Vagina (tissue), 2 donors: ENCODE measurements at regions of chr11 and their contacts with region 1.

Region 1: GRCh38 chr11:126416542-126417090 is 61.1 kb downstream of the ST3GAL4 start:
- DNase-seq: no peak
- H3K4me3 ChIP-seq: peak overlapping the region; percentile 50 to 52
- H3K27ac ChIP-seq: peak overlapping the region; percentile 86
- H3K4me1 ChIP-seq: peaks cover 40% of the 10 kb centered on the region
- H3K27me3 ChIP-seq: no peaks in the 10 kb centered on the region
- CTCF ChIP-seq: no peak
- POLR2A ChIP-seq: peak in 1 of 2 donors; percentile 44

Region 2: DNA sequence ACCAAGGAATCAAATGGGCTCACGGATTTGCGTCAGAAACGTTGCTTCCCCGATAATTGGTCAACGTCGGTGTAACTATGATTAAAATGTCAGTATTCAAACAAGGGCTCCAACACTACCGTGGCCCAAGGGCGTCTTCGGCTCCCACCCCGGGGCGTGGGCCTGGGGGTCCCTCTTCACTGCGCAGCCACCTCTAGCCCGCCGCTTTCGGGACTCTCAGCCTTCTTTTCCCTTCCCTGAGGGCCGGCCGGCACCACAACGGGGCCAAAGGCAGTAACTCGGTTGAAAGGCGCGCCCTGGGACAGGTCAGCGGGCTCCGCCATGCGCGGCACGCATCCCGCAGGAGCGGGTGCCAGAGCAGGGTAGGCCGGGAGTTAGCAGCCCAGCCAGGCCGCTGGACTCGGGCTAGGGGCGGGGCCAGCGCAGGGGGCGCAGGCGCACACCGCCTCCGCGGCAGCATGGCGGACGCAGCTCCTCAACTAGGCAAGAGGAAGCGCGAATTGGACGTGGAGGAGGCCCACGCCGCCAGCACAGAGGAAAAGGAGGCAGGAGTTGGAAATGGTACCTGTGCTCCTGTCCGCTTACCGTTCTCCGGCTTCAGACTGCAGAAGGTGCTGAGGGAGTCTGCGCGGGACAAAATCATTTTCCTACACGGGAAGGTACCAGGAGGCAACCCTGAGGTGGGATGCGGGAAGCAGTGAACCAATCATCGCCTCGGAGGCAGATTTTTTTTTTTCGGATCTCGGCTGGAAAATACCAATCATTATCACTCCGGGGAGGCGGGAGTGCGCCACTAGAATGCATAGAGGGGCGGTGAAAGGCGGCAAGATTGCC is 112.8 kb before region 1 on chr11 and contains the start of gene DCPS:
- intact Hi-C with region 1: loop called (anchors 10 kb)
- DNase-seq: peak in 1 of 2 donors; percentile 94
- H3K4me3 ChIP-seq: peak within 1 kb of the TSS; percentile 59 to 76
- H3K27ac ChIP-seq: peak within 1 kb of the TSS; percentile 89
- H3K4me1 ChIP-seq: peaks cover 9% of the 10 kb centered on the region
- H3K27me3 ChIP-seq: no peaks in the 10 kb centered on the region
- CTCF ChIP-seq: no peak
- POLR2A ChIP-seq: peak in 1 of 2 donors; percentile 36
- total RNA-seq, gene DCPS: 15.5 TPM

Region 3: DNA sequence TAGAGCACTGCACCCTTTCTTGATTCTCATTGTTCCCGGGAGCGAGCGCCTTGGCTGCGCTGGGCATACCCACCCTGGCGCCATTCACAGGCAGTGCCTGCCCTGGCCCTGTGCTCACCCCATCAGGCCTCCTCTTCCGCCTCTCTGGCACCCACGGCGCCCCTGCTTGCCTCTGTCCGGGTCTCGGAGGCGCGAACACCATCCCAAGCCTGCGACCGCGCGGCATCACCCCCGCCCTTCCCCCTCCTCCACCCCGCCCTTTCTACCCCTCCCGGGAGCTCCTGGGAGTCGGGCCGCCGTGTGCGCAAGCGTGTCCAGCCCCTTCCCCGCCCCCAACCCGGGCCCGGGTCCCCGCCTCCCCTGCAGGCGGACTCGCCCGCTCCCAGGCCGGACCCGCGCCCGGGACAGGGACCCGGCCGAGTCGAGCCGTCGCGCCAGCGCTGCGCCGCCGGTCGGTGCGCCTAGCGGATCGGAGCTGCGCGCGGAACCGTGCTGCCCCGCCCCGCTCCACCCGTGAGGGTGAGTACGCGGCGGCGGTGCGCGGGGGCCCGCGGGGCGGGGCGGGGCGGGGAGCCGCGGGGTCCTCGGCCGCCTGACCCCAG is 61.2 kb before region 1 on chr11 and contains the start of gene ST3GAL4:
- intact Hi-C with region 1: loop called (anchors 5 kb)
- DNase-seq: peak in 1 of 2 donors; percentile 89
- H3K4me3 ChIP-seq: peak within 1 kb of the TSS; percentile 72 to 86
- H3K27ac ChIP-seq: peak within 1 kb of the TSS; percentile 88
- H3K4me1 ChIP-seq: peaks cover 76% of the 10 kb centered on the region
- H3K27me3 ChIP-seq: no peaks in the 10 kb centered on the region
- CTCF ChIP-seq: no peak
- POLR2A ChIP-seq: peak in 1 of 2 donors; percentile 24
- total RNA-seq, gene ST3GAL4: 41.5 TPM

Region 4: GRCh38 chr11:126403658-126404057 is 13.0 kb before region 1 on chr11:
- intact Hi-C with region 1: no loop called
- DNase-seq: no peak
- H3K4me3 ChIP-seq: no peak overlapping the region
- H3K27ac ChIP-seq: peak overlapping the region; percentile 14
- H3K4me1 ChIP-seq: peaks cover 34% of the 10 kb centered on the region
- H3K27me3 ChIP-seq: no peaks in the 10 kb centered on the region
- CTCF ChIP-seq: no peak
- POLR2A ChIP-seq: no peak